Endothelial cell of umbilical vein (primary cell): ENCODE measurements at regions of chr2 and their contacts with region 1.

Region 1: GRCh38 chr2:143564419-143564818 is 435.2 kb downstream of the ARHGAP15 start:
- DNase-seq: no peak
- H3K4me3 ChIP-seq: no peak overlapping the region
- H3K27ac ChIP-seq: no peak overlapping the region
- H3K4me1 ChIP-seq: peaks cover 3% of the 10 kb centered on the region
- H3K27me3 ChIP-seq: no peaks in the 10 kb centered on the region
- CTCF ChIP-seq: no peak
- POLR2A ChIP-seq: no peak

Region 2: DNA sequence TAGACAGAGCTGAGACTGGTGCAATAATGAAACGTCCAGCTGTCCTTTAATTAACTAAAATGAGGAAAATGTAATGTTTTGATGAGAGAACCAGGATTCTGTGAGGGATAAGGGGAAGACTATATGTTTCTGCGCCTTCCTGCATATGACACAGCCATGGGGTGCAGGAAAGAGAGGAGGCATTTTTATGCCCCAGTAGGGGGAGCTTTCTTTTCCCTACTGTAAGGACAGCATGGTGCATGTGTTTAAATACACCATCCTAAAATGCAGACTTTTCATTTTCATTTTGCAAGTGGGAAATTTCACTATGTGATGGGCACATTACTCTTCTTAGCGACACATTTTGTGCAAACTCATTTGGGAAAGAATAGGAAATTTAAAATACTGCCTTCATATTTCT is 10.9 kb after region 1 on chr2:
- CTCF ChIA-PET with region 1: interaction called, 11 read pairs
- POLR2A ChIA-PET with region 1: no interaction called
- dilution Hi-C with region 1: no loop called
- intact Hi-C with region 1: no loop called
- DNase-seq: no peak
- H3K4me3 ChIP-seq: no peak overlapping the region
- H3K27ac ChIP-seq: no peak overlapping the region
- H3K4me1 ChIP-seq: no peaks in the 10 kb centered on the region
- H3K27me3 ChIP-seq: no peaks in the 10 kb centered on the region
- CTCF ChIP-seq: peak; percentile 8 to 33
- POLR2A ChIP-seq: no peak